AG04450 (cell line): ENCODE measurements at regions of chr5 and their contacts with region 1.

Region 1: GRCh38 chr5:31459594-31459993 is 72.3 kb downstream of the DROSHA start:
- DNase-seq: no peak
- H3K4me3 ChIP-seq: no peak overlapping the region
- H3K27ac ChIP-seq: no peak overlapping the region
- H3K27me3 ChIP-seq: no peaks in the 10 kb centered on the region
- CTCF ChIP-seq: no peak

Region 2: DNA sequence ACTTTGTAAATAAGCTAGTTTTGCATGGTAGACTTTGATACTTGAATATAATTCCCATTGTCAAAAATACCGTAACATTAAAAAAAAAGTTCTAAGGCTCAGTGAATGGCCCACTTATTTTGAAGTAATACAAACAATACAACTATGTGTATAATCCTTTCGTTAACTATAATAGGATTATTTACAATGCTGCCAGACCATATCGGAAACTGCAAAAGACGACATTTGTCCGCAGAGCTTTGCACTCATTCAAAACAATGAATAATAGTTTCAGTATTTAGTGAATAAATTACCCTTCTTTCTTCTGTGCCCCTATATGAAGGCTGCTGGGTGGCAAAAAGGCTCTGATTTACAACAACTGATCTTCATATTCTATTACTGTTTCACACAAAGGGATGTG is 49.5 kb before region 1 on chr5:
- CTCF ChIA-PET with region 1: interaction called, 10 read pairs
- POLR2A ChIA-PET with region 1: no interaction called
- DNase-seq: no peak
- H3K4me3 ChIP-seq: no peak overlapping the region
- H3K27ac ChIP-seq: no peak overlapping the region
- H3K27me3 ChIP-seq: no peaks in the 10 kb centered on the region
- CTCF ChIP-seq: no peak